PC-9 (cell line): ENCODE measurements at regions of chr3 and their contacts with region 1.

Region 1: GRCh38 chr3:120708408-120708807 is 26.4 kb upstream of the HGD start:
- DNase-seq: no peak
- H3K4me3 ChIP-seq: no peak overlapping the region
- H3K27ac ChIP-seq: no peak overlapping the region
- H3K4me1 ChIP-seq: no peaks in the 10 kb centered on the region
- H3K27me3 ChIP-seq: no peaks in the 10 kb centered on the region
- CTCF ChIP-seq: no peak

Region 2: DNA sequence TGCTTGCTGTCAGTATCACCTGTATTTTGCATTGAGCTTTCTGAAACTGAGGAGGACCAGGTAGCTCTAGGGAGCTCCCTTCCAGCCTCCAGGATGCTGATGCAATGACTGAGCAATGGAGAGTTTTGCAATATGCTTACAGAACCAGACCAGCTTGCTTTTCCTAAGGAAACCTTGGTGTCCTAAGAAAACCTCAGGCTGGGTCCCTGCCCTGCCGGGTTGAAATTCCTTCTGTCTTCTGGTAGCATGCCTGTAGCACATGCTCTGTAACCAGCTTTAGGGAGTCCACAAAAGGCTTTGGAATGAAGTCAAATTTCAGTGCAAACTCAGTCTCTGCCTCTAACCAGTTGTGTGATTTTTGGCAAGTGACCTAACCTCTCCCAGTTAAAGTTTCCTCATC is 548.4 kb before region 1 on chr3:
- CTCF ChIA-PET with region 1: no interaction called
- POLR2A ChIA-PET with region 1: no interaction called
- intact Hi-C with region 1: no loop called
- DNase-seq: peak; percentile 90 to 99
- H3K4me3 ChIP-seq: no peak overlapping the region; the same call in 1 of the 2 replicates
- H3K27ac ChIP-seq: peak overlapping the region; percentile 98
- H3K4me1 ChIP-seq: peaks cover 43% of the 10 kb centered on the region
- H3K27me3 ChIP-seq: no peaks in the 10 kb centered on the region
- CTCF ChIP-seq: no peak

Region 3: GRCh38 chr3:120816728-120817127 is 108.3 kb after region 1 on chr3:
- CTCF ChIA-PET with region 1: no interaction called
- POLR2A ChIA-PET with region 1: interaction called, 17 read pairs
- intact Hi-C with region 1: no loop called
- DNase-seq: no peak
- H3K4me3 ChIP-seq: no peak overlapping the region
- H3K27ac ChIP-seq: no peak overlapping the region
- H3K4me1 ChIP-seq: no peaks in the 10 kb centered on the region
- H3K27me3 ChIP-seq: no peaks in the 10 kb centered on the region
- CTCF ChIP-seq: no peak

Region 4: GRCh38 chr3:120838441-120839091 is 130.2 kb after region 1 on chr3:
- CTCF ChIA-PET with region 1: no interaction called
- POLR2A ChIA-PET with region 1: no interaction called
- intact Hi-C with region 1: no loop called
- DNase-seq: no peak
- H3K4me3 ChIP-seq: no peak overlapping the region
- H3K27ac ChIP-seq: no peak overlapping the region
- H3K4me1 ChIP-seq: 0 out of 2 replicates have a peak, but pooled peaks cover 7% of the 10 kb centered on the region
- H3K27me3 ChIP-seq: no peaks in the 10 kb centered on the region
- CTCF ChIP-seq: no peak